ENCODE measurements at regions of chrX and their contacts with region 1.

Region 1: GRCh38 chrX:107562482-107562881 is 65.8 kb upstream of the PRPS1 start:
- DNase-seq: peak; percentile 83
- H3K4me3 ChIP-seq: no peak overlapping the region
- CTCF ChIP-seq: no peak

Region 2: GRCh38 chrX:107522901-107523300 is 39.6 kb before region 1 on chrX:
- CTCF ChIA-PET with region 1: no interaction called
- POLR2A ChIA-PET with region 1: no interaction called
- DNase-seq: no peak
- H3K4me3 ChIP-seq: no peak overlapping the region
- CTCF ChIP-seq: no peak

Region 3: DNA sequence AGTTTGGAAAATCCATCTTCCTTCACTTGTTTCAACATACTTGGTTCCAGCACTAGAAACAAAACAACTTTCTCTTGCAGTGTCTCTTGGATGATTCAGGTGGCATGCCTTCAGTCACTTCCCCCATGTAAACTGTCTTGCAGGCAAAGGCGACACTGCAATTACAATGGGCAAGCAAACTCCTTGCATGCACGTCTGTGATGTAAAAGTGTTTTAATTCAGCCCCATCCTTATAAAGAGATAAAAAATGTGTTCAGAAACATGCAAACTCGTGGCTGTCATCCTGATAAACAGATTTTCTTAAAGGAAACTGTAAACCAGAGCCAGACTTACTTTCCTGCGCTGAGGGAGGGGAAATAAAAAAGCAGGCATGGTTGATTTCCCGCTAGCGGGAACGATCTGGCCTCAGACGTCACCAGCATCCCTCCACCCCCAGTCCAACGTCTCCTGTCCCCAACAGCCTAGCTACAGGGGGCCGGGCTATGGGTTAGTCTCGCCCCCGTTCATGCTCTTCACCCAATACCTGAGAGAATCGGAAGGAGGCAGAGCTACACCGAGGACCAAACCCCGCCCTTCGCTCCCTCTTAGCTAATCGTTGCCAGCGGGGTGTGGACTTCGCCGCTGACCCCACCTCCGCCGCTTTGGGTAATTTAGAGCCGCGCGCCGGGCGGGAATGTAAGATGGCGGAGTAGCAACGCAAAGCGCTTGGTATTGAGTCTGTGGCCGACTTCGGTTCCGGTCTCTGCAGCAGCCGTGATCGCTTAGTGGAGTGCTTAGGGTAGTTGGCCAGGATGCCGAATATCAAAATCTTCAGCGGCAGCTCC is 65.6 kb after region 1 on chrX and contains the start of gene PRPS1:
- CTCF ChIA-PET with region 1: interaction called, 8 read pairs
- POLR2A ChIA-PET with region 1: interaction called, 12 read pairs
- DNase-seq: peak; percentile 71
- H3K4me3 ChIP-seq: peak within 1 kb of the TSS; percentile 75
- CTCF ChIP-seq: no peak